ENCODE measurements at regions of chr7 and their contacts with region 1.

Region 1: DNA sequence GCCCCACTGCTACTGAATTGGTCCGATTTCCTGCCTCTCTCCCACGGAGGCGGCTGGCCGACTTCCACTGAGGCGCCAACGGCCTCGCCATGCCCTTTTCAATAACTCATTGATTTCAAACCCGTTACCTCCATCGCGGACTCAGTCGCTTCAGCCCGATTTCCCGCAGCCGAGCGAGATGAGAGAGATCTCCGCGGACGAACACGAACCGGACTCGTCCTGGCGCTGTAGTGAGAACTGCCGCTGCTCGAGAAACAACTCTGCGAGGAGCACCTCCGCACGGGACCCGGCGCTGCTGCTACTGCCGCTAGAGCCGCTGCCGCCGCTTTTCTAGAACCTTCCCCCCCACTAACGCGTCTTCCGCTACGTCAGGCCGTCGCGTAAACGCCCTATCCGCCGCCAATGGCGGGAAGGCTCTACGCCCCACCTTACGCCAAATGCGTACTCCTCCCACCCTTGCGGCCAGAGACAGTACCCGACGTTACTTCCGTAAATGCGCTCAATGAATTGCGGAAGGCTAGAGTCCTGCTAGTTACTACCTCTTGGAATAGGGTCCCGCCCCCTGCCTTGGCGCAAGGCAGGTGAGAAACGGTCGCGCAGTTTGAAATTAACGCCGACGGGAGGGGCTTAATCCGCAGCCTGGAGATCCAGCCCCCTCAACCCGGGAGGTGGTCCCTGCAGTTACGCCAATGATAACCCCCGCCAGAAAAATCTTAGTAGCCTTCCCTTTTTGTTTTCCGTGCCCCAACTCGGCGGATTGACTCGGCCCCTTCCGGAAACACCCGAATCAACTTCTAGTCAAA is at the start of gene HNRNPA2B1:
- DNase-seq: peak; percentile 100
- ATAC-seq: peak; percentile 65
- H3K4me3 ChIP-seq: peak within 1 kb of the TSS; percentile 80 to 100 (median 100)
- H3K4me3 Mint-ChIP-seq: peak within 1 kb of the TSS; percentile 99
- H3K27ac ChIP-seq: peak within 1 kb of the TSS; percentile 97 to 99
- H3K27ac Mint-ChIP-seq: peak within 1 kb of the TSS; percentile 100
- H3K4me1 ChIP-seq: peaks cover 37 to 40% of the 10 kb centered on the region in 2 donors
- H3K4me1 Mint-ChIP-seq: peaks cover 53% of the 10 kb centered on the region
- H3K27me3 ChIP-seq: no peaks in the 10 kb centered on the region
- H3K27me3 Mint-ChIP-seq: no peaks in the 10 kb centered on the region
- CTCF ChIP-seq: no peak
- total RNA-seq, gene HNRNPA2B1: 524 and 536 TPM in 2 replicates

Region 2: DNA sequence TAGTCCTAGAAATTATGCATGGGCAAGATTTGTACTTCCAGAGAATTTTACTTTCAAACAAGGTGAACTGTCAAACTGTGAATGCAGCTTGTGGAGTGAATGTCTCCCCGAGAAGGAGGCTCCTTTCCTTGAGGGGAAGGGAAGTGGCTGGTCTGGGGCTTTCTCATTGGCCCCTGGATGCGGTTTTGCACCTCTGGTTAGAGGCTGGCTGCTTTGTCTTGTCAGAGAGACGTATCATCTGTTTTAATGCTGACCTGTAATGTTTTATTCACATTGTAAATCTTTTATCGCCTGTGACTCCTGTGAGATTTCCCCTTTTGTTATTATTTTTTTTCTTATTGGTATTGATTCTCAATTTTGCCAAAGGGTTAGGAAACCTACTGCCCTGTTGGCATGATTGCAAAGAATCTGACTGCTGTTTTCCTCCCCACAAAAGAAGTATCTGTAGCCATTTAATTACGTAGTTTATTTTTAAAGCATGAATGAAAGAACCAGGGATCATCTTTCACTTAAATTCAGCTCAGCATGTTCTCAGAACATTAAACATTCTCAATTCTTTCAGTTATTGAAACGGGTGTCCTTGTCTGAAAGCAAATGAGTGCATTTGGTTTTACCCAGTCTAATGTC is 286.9 kb before region 1 on chr7:
- CTCF ChIA-PET with region 1: no interaction called
- POLR2A ChIA-PET with region 1: no interaction called
- intact Hi-C with region 1: no loop called
- DNase-seq: no peak
- ATAC-seq: no peak
- H3K4me3 ChIP-seq: no peak overlapping the region
- H3K4me3 Mint-ChIP-seq: no peak overlapping the region
- H3K27ac ChIP-seq: no peak overlapping the region
- H3K27ac Mint-ChIP-seq: no peak overlapping the region
- H3K4me1 ChIP-seq: no peaks in the 10 kb centered on the region
- H3K4me1 Mint-ChIP-seq: no peaks in the 10 kb centered on the region
- H3K27me3 ChIP-seq: peaks cover 0 to 18% (median 6%) of the 10 kb centered on the region in 4 experiments
- H3K27me3 Mint-ChIP-seq: peaks cover 26% of the 10 kb centered on the region
- CTCF ChIP-seq: no peak

Region 3: GRCh38 chr7:25951031-25951948 is 249.4 kb before region 1 on chr7:
- CTCF ChIA-PET with region 1: no interaction called
- POLR2A ChIA-PET with region 1: interaction called, 3 read pairs
- intact Hi-C with region 1: loop called (anchors 2 kb)
- DNase-seq: peak; percentile 90
- ATAC-seq: peak; percentile 90
- H3K4me3 ChIP-seq: peak overlapping the region; percentile 15 to 69 (median 51)
- H3K4me3 Mint-ChIP-seq: peak overlapping the region; percentile 89
- H3K27ac ChIP-seq: no peak overlapping the region
- H3K27ac Mint-ChIP-seq: peak overlapping the region; percentile 78
- H3K4me1 ChIP-seq: peaks cover 32 to 33% of the 10 kb centered on the region in 2 donors
- H3K4me1 Mint-ChIP-seq: peaks cover 35% of the 10 kb centered on the region
- H3K27me3 ChIP-seq: peaks cover 0 to 38% (median 33%) of the 10 kb centered on the region in 4 experiments
- H3K27me3 Mint-ChIP-seq: peaks cover 30% of the 10 kb centered on the region
- CTCF ChIP-seq: no peak

Region 4: DNA sequence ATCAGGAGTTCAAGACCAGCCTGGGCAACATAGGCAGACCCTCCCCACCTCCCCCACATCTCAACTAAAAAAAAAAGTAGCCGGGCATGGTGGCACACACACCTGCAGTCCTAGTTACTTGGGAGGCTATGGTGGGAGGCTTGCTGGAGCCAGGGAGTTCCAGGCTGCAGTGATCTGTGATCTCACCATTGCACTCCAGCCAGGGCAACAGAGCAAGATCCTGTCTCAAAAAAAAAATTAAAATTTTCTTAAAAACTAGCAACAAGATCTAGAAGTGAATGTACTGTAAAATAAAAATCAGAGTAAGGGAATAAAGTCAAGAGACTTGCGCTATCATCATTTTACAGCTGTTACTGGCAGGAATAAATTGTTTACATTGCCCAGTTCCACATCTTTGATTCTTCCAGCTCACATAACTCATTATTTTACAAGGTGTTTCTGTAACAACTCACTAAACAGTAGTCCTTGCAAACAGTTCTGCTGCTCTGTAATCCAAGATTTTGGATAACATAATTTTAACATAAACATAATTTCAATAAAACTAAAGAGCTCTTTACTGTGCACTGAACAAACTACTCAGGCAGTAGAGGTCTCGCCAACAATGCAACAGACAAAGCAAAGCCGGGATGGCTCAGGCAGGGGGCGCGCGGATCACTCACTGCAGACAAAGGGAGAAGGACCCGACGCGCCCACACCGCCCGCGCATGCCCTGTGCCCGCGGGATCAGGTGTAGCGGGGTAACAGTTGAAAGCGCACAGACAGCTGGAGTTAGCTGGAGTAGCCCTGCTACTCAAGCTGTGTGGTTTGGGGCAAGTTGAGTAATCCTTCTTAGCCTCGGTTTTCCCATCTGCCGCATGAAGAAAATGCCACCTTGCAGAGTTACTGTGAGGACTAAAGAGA is 122.0 kb before region 1 on chr7:
- CTCF ChIA-PET with region 1: interaction called, 53 read pairs
- POLR2A ChIA-PET with region 1: interaction called, 7 read pairs
- intact Hi-C with region 1: loop called (anchors 1 kb)
- DNase-seq: peak; percentile 88
- ATAC-seq: peak; percentile 100
- H3K4me3 ChIP-seq: no peak overlapping the region
- H3K4me3 Mint-ChIP-seq: peak overlapping the region; percentile 35
- H3K27ac ChIP-seq: no peak overlapping the region
- H3K27ac Mint-ChIP-seq: no peak overlapping the region
- H3K4me1 ChIP-seq: peaks cover 6 to 9% of the 10 kb centered on the region in 2 donors
- H3K4me1 Mint-ChIP-seq: peaks cover 9% of the 10 kb centered on the region
- H3K27me3 ChIP-seq: peaks cover 0 to 31% (median 14%) of the 10 kb centered on the region in 4 experiments
- H3K27me3 Mint-ChIP-seq: peaks cover 53% of the 10 kb centered on the region
- CTCF ChIP-seq: peak; percentile 71

Region 5: GRCh38 chr7:26101361-26102151 is 99.1 kb before region 1 on chr7:
- CTCF ChIA-PET with region 1: interaction called, 12 read pairs
- POLR2A ChIA-PET with region 1: interaction called, 11 read pairs
- intact Hi-C with region 1: no loop called
- DNase-seq: peak; percentile 62
- ATAC-seq: peak; percentile 64
- H3K4me3 ChIP-seq: peak overlapping the region; percentile 42 to 85 (median 75)
- H3K4me3 Mint-ChIP-seq: peak overlapping the region; percentile 99
- H3K27ac ChIP-seq: peak overlapping the region; percentile 43 to 77
- H3K27ac Mint-ChIP-seq: peak overlapping the region; percentile 96
- H3K4me1 ChIP-seq: peaks cover 30 to 48% of the 10 kb centered on the region in 2 donors
- H3K4me1 Mint-ChIP-seq: peaks cover 45% of the 10 kb centered on the region
- H3K27me3 ChIP-seq: no peaks in the 10 kb centered on the region
- H3K27me3 Mint-ChIP-seq: no peaks in the 10 kb centered on the region
- CTCF ChIP-seq: no peak

Region 6: GRCh38 chr7:26180792-26181198 is 19.9 kb before region 1 on chr7:
- CTCF ChIA-PET with region 1: interaction called, 11 read pairs
- POLR2A ChIA-PET with region 1: interaction called, 3 read pairs
- intact Hi-C with region 1: no loop called
- DNase-seq: no peak
- ATAC-seq: no peak
- H3K4me3 ChIP-seq: no peak overlapping the region
- H3K4me3 Mint-ChIP-seq: no peak overlapping the region
- H3K27ac ChIP-seq: peak overlapping the region in 1 of 2 donors; percentile 27
- H3K27ac Mint-ChIP-seq: peak overlapping the region; percentile 7
- H3K4me1 ChIP-seq: peaks cover 0 to 3% of the 10 kb centered on the region in 2 donors
- H3K4me1 Mint-ChIP-seq: peaks cover 46% of the 10 kb centered on the region
- H3K27me3 ChIP-seq: no peaks in the 10 kb centered on the region
- H3K27me3 Mint-ChIP-seq: no peaks in the 10 kb centered on the region
- CTCF ChIP-seq: no peak

Region 7: DNA sequence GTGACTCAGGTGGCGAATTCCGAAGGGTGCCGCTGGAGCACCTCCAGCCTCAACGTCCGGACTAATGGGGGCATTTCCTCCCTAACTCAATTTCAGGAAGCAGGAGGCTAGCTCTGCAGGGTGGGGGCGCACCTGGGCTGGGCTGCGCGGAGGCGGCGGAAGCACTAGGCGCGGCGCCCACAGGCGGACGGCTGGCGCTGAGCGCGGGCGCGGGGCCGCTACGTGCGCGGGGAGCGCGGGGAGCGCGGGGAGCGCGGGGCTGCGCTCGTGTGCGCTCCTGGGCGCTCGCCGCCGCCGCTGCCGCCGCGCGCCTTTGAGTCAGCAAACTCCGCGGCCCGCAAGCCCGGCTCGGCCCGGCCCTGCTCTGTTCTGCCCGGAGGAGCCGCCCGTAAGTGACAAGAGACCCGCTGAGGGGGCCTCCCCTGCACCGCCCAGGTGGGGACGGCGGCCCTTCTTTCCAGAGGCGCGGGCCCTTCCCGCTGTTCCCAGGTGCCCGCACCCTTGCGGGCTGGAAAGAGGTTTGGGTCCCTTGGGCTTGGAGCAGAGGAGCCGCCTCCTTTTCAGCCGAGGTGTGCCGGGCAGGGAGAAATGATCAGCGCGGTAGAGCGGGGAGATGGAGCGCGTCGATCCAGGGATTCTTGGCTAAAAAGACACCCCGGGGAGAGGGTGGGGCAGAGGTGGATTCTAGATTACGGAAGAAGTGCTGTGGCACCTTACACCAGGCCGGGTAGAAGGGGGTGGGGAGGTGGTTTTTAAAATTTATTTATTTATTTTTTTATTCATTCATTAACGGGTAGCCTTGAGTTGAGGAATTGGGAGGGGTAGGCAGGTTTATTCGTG is 91.3 kb after region 1 on chr7 and contains the start of gene SNX10:
- CTCF ChIA-PET with region 1: interaction called, 8 read pairs
- POLR2A ChIA-PET with region 1: interaction called, 5 read pairs
- intact Hi-C with region 1: loop called (anchors 2 kb)
- DNase-seq: peak; percentile 90
- ATAC-seq: peak; percentile 78
- H3K4me3 ChIP-seq: peak within 1 kb of the TSS; percentile 89 to 96 (median 90)
- H3K4me3 Mint-ChIP-seq: peak within 1 kb of the TSS; percentile 94
- H3K27ac ChIP-seq: peak within 1 kb of the TSS; percentile 60 to 82
- H3K27ac Mint-ChIP-seq: peak within 1 kb of the TSS; percentile 96
- H3K4me1 ChIP-seq: peaks cover 42 to 50% of the 10 kb centered on the region in 2 donors
- H3K4me1 Mint-ChIP-seq: peaks cover 45% of the 10 kb centered on the region
- H3K27me3 ChIP-seq: no peaks in the 10 kb centered on the region
- H3K27me3 Mint-ChIP-seq: no peaks in the 10 kb centered on the region
- CTCF ChIP-seq: peak; percentile 46
- total RNA-seq, gene SNX10: 26.5 and 33.6 TPM in 2 replicates

Region 8: DNA sequence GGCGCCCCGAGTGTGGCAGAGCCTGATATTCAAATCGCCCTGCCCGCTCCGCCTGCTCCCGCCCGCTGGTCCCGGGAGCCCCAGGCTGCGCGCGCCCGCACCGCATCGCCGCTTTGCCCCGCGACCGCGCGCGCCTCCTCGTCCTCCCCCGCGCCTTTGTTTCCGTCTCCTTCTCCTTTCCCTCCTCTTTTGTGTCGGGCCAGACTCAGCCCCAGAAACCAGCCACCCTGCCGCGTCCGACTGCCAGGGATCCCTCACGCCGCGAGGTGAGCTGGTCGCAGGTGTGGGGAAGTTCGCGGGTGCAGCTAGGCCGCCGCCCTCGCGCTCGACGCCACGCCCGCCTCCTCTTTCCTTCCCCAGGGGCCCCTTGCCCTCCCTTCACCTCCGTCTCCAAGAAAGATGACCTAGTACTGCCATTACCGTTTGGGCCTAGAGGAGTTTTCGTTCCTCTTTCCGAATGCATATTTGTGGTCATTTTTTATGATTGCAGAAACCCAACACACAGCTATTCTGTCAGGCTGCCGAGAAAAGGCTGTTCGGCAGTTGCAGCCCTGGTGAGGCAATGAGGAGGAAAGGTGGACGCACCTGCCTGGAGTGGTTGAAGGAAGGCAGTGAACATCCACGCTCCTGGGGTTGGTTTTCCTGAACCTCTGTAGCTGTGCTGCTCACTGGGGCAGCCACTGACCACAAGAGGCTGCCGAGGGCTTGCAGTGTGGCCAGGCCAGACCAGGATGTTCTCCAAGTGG is 198.3 kb after region 1 on chr7:
- CTCF ChIA-PET with region 1: no interaction called
- POLR2A ChIA-PET with region 1: interaction called, 16 read pairs
- intact Hi-C with region 1: no loop called
- DNase-seq: peak; percentile 95
- ATAC-seq: peak; percentile 86
- H3K4me3 ChIP-seq: peak overlapping the region in 4 of 5 experiments; percentile 50 to 70 (median 64)
- H3K4me3 Mint-ChIP-seq: peak overlapping the region; percentile 99
- H3K27ac ChIP-seq: peak overlapping the region; percentile 79 to 81
- H3K27ac Mint-ChIP-seq: peak overlapping the region; percentile 100
- H3K4me1 ChIP-seq: peaks cover 20 to 28% of the 10 kb centered on the region in 2 donors
- H3K4me1 Mint-ChIP-seq: peaks cover 32% of the 10 kb centered on the region
- H3K27me3 ChIP-seq: peaks cover 0 to 8% (median 0%) of the 10 kb centered on the region in 4 experiments
- H3K27me3 Mint-ChIP-seq: peaks cover 3% of the 10 kb centered on the region
- CTCF ChIP-seq: no peak

Region 9: GRCh38 chr7:27235387-27236311 is 1035.0 kb after region 1 on chr7:
- CTCF ChIA-PET with region 1: no interaction called
- POLR2A ChIA-PET with region 1: no interaction called
- intact Hi-C with region 1: no loop called
- DNase-seq: peak; percentile 32
- ATAC-seq: no peak
- H3K4me3 ChIP-seq: peak overlapping the region in 2 of 5 experiments; percentile 10 to 29
- H3K4me3 Mint-ChIP-seq: peak overlapping the region; percentile 50
- H3K27ac ChIP-seq: no peak overlapping the region
- H3K27ac Mint-ChIP-seq: no peak overlapping the region
- H3K4me1 ChIP-seq: peaks cover 22 to 28% of the 10 kb centered on the region in 2 donors
- H3K4me1 Mint-ChIP-seq: peaks cover 21% of the 10 kb centered on the region
- H3K27me3 ChIP-seq: peaks cover 0 to 70% (median 42%) of the 10 kb centered on the region in 4 experiments
- H3K27me3 Mint-ChIP-seq: peaks cover 64% of the 10 kb centered on the region
- CTCF ChIP-seq: no peak

Measured in B cell (primary cell).